Left cardiac atrium (tissue), 4 donors: ENCODE measurements at regions of chr2 and their contacts with region 1.

Region 1: DNA sequence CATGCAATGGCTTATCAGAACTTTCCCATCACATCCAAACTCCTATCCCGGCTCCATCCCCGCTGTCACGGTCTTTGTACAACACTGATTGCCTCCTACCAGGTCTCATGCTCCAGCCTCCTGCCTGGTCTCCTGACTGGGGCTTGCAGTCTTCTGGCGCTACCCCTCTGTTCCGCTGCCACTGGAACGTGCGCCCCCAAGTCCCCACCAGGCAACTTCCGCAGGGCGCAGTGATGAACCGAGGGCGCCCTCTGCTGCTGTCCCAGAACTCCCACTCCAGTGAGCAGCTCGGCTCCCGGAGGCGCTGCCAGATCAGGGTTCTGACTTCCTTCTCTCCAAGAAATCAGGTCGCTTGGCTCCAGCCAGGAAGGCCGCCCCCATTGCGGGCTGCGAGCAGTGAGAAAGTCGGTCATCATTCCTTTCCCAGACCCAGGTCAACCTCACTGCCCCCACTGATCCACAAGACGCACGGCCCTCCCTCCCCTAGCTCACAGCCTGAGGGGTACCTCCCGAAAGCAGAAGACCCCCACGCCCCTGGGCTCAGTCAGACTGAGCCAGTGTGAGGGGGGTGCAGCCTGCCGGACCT is 43.9 kb upstream of the RAB11FIP5 start:
- DNase-seq: peak; percentile 79
- ATAC-seq: peak; percentile 85 to 93

Region 2: GRCh38 chr2:73085691-73086360 is 70.8 kb before region 1 on chr2:
- intact Hi-C with region 1: loop called (anchors 2 to 5 kb)
- DNase-seq: peak; percentile 87
- ATAC-seq: peak; percentile 57 to 80

Region 3: GRCh38 chr2:73268830-73269685 is 112.4 kb after region 1 on chr2:
- intact Hi-C with region 1: no loop called
- DNase-seq: no peak
- ATAC-seq: peak; percentile 13 to 38

Region 4: GRCh38 chr2:73284296-73285158 is 127.9 kb after region 1 on chr2 and contains the start of gene FBXO41:
- intact Hi-C with region 1: no loop called
- DNase-seq: no peak
- ATAC-seq: peak; percentile 87
- total RNA-seq, gene FBXO41: 2.0 to 2.3 TPM